Breast epithelium (tissue), 4 donors: ENCODE measurements at regions of chr3 and their contacts with region 1.

Region 1: GRCh38 chr3:11638495-11639358 is 5.0 kb downstream of the VGLL4 start:
- DNase-seq: peak in 1 of 2 donors; percentile 64
- H3K4me3 ChIP-seq: peak overlapping the region; percentile 27 to 68 (median 59)
- H3K27ac ChIP-seq: peak overlapping the region; percentile 92 to 98
- H3K4me1 ChIP-seq: peaks cover 18 to 20% of the 10 kb centered on the region in 2 donors
- H3K27me3 ChIP-seq: no peaks in the 10 kb centered on the region
- CTCF ChIP-seq: no peak
- POLR2A ChIP-seq: no peak

Region 2: GRCh38 chr3:11564471-11565001 is 74.2 kb before region 1 on chr3:
- intact Hi-C with region 1: loop called (anchors 2 kb)
- DNase-seq: no peak
- H3K4me3 ChIP-seq: peak overlapping the region in 1 of 3 donors; percentile 28
- H3K27ac ChIP-seq: peak overlapping the region; percentile 60 to 78
- H3K4me1 ChIP-seq: peaks cover 14 to 20% of the 10 kb centered on the region in 2 donors
- H3K27me3 ChIP-seq: no peaks in the 10 kb centered on the region
- CTCF ChIP-seq: no peak
- POLR2A ChIP-seq: no peak